GM12878 (cell line): ENCODE measurements at regions of chr11 and their contacts with region 1.

Region 1: GRCh38 chr11:124961972-124962609 is 8.1 kb downstream of the CCDC15 start:
- DNase-seq: peak; percentile 51
- ATAC-seq: peak; percentile 97
- H3K4me3 ChIP-seq: no peak overlapping the region
- H3K27ac ChIP-seq: no peak overlapping the region
- H3K4me1 ChIP-seq: no peaks in the 10 kb centered on the region
- H3K27me3 ChIP-seq: no peaks in the 10 kb centered on the region
- CTCF ChIP-seq: peak; percentile 67 to 91 (median 74); a peak in 5 of 6 replicates
- EP300 ChIP-seq: no peak
- POLR2A ChIP-seq: no peak
- RAD21 ChIP-seq: peak; percentile 97

Region 2: DNA sequence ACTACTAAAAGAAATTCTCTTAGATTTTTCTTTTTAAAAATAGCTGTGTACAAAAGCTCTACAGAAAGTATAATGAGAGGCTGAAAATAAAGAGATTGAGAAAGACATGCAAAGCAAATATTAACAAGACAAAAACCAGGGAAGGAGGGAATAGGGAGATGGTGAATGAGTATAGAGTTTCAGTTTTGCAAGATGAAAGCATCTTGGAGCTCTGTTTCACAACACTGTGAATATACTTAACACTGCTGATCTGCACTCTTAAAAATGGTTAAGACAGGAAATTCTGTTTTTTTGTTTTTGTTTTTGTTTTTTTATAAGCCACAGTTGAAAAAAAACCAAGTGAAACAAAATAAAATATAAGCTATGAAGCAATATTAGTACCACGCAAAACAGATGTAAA is 143.8 kb after region 1 on chr11:
- CTCF ChIA-PET with region 1: interaction called, 6 read pairs
- POLR2A ChIA-PET with region 1: no interaction called
- RAD21 ChIA-PET with region 1: no interaction called
- SMC1A ChIA-PET with region 1: interaction called, 11 read pairs
- in situ Hi-C with region 1: no loop called
- intact Hi-C with region 1: no loop called
- DNase-seq: no peak
- ATAC-seq: peak; percentile 34; the same call in 1 of the 3 replicates
- H3K4me3 ChIP-seq: no peak overlapping the region
- H3K27ac ChIP-seq: no peak overlapping the region
- H3K4me1 ChIP-seq: peaks cover 3% of the 10 kb centered on the region; the same call in 1 of the 2 replicates
- H3K27me3 ChIP-seq: no peaks in the 10 kb centered on the region
- CTCF ChIP-seq: no peak
- EP300 ChIP-seq: no peak
- POLR2A ChIP-seq: no peak
- RAD21 ChIP-seq: no peak

Region 3: GRCh38 chr11:125390946-125391345 is 428.9 kb after region 1 on chr11:
- CTCF ChIA-PET with region 1: no interaction called
- POLR2A ChIA-PET with region 1: no interaction called
- RAD21 ChIA-PET with region 1: no interaction called
- SMC1A ChIA-PET with region 1: no interaction called
- in situ Hi-C with region 1: no loop called
- intact Hi-C with region 1: no loop called
- DNase-seq: no peak
- ATAC-seq: no peak
- H3K4me3 ChIP-seq: no peak overlapping the region
- H3K27ac ChIP-seq: no peak overlapping the region
- H3K4me1 ChIP-seq: no peaks in the 10 kb centered on the region
- H3K27me3 ChIP-seq: peaks cover 0 to 2% of the 10 kb centered on the region in 2 experiments; a peak in 3 of 4 replicates
- CTCF ChIP-seq: no peak
- EP300 ChIP-seq: no peak
- POLR2A ChIP-seq: no peak
- RAD21 ChIP-seq: no peak